ENCODE measurements at regions of chr9 and their contacts with region 1.

Region 1: GRCh38 chr9:133054966-133055365 is 6.8 kb upstream of the CEL start:
- DNase-seq: peak; percentile 88
- H3K4me3 ChIP-seq: no peak overlapping the region
- H3K27me3 ChIP-seq: no peaks in the 10 kb centered on the region
- CTCF ChIP-seq: no peak

Region 2: DNA sequence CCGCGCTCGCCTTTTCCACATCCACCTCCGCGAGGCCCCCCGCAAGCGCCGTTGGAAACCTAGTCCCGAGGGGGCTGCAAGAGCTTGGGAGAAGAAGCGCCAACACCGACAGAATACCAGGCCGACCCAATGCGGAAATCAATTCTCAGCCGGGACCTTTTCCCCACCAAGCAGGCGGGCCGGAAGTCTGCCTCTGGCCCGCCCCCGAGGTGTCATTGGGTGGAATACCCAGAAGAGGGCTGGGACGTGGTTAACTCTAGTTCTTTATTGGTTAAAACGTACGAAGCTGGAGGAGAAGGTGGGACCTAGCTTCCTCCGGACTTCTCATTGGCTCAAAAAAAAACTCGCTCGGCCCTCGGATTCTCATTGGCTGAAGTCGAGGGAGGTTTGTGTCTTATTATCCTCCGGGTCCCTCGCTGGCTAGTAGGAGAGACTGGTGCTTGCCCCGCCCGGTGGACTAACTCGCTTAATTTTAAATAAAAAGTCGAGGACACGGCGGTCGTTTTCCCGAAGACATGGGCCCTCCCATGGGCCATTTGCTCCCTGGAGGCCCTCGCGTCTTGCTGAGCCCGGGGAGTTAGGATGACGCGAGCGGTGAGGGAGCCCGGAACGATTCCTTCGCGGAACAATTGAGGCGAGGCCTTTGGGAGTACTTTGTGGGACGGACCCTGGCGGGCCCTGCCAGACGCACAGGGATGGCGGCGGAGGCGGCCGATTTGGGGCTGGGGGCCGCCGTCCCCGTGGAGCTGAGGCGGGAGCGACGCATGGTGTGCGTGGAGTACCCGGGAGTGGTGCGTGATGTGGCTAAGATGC is 24.4 kb before region 1 on chr9 and contains the start of gene GTF3C5:
- CTCF ChIA-PET with region 1: interaction called, 11 read pairs
- POLR2A ChIA-PET with region 1: no interaction called
- DNase-seq: peak; percentile 98
- H3K4me3 ChIP-seq: peak within 1 kb of the TSS; percentile 88
- H3K27me3 ChIP-seq: no peaks in the 10 kb centered on the region
- CTCF ChIP-seq: no peak
- polyA plus RNA-seq, gene GTF3C5: 36.0 and 47.7 TPM in 2 replicates

Region 3: DNA sequence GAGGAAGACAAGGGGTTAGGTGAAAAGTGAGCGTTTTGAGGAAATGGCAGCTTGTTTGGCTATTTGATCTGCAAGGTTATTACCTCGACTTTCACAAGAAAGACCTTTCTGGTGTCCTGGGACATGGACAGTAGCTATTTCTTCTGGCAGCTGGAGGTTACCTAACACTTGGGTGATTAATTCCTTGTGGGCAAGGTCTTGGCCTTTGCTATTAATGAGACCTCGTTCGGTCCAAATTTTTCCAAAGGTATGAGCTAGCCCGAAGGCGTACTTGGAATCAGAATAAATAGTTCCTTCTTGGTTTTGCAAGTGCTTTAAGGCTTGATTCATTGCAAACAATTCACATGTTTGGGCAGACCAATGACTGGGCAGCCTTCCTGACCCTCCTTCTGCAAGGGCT is 19.3 kb before region 1 on chr9:
- CTCF ChIA-PET with region 1: interaction called, 11 read pairs
- POLR2A ChIA-PET with region 1: no interaction called
- DNase-seq: no peak
- H3K4me3 ChIP-seq: no peak overlapping the region
- H3K27me3 ChIP-seq: no peaks in the 10 kb centered on the region
- CTCF ChIP-seq: no peak

Region 4: DNA sequence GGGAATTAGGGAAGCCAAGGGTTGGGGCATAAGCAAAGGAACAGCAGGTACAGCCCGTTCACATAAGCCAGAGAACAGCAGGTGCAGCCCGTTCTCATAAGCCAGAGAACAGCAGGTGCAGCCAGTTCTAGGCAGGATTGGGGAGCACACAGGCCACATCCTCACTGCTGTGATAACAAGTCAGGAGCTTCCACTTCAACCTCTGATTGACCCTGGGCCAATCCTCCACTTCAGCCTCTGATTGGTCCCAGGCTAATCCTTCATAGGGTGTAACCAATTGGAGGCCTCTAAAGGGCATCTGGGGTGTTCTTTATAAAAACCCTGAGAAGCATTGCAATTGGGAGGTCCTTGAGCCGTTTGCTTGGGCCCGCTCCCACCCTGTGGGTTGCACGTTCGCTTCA is 34.3 kb after region 1 on chr9:
- CTCF ChIA-PET with region 1: no interaction called
- POLR2A ChIA-PET with region 1: no interaction called
- DNase-seq: no peak
- H3K4me3 ChIP-seq: no peak overlapping the region
- H3K27me3 ChIP-seq: no peaks in the 10 kb centered on the region
- CTCF ChIP-seq: no peak